HCT116 (cell line): ENCODE measurements at regions of chr11 and their contacts with region 1.

Region 1: GRCh38 chr11:2366261-2366660 is 10.8 kb upstream of the CD81 start:
- DNase-seq: no peak
- ATAC-seq: no peak
- H3K4me3 ChIP-seq: no peak overlapping the region
- H3K27ac ChIP-seq: no peak overlapping the region
- H3K4me1 ChIP-seq: no peaks in the 10 kb centered on the region
- H3K27me3 ChIP-seq: 0 out of 2 replicates have a peak, but pooled peaks cover 5% of the 10 kb centered on the region
- CTCF ChIP-seq: no peak
- POLR2A ChIP-seq: no peak
- RAD21 ChIP-seq: no peak

Region 2: DNA sequence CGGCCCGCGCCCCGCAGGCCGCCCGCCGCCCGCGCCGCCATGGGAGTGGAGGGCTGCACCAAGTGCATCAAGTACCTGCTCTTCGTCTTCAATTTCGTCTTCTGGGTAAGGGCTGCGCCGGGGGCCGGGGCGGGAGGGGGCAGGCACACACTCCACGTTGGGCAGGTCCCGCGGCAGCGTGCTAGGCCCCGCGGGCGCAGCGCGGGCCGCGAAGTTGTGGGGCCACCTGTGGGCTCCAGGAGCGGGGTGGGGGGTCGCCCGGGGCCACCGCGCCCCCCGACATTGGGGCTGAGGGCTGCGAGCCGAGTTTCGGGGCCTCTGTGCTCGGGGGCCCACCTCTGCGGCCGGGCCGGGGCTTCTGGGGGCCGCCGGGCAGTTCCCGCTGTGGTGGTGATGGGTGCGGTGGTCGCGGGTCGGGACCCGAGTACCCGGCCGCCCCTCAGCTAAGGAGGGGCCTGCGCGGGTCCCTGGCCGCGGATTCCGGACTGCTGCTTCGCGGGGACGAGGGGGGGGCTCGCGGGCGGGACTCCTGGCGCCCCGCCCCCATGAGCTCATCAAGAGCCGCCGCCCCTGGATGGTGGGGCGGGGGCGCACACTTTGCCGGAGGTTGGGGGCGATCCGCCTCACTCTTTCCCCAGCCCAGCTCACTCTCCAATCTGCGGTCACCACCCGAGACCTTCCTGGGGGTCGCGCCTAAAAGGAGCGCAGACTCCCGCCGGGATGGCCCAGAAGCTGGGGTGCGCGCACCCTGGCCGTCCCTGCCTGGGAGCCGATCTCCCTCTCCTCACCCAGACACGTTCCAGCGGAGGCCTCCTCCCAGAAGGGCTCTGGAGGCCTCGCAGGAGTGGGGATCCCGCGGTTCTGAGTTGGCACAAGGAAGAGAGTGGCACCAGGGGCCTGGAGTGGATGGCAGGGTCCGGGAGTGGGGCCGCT is 11.5 kb after region 1 on chr11:
- CTCF ChIA-PET with region 1: no interaction called
- POLR2A ChIA-PET with region 1: interaction called, 14 read pairs
- RAD21 ChIA-PET with region 1: no interaction called
- intact Hi-C with region 1: no loop called
- DNase-seq: no peak
- ATAC-seq: peak; percentile 47
- H3K4me3 ChIP-seq: peak overlapping the region; percentile 68 to 95
- H3K27ac ChIP-seq: peak overlapping the region; percentile 81
- H3K4me1 ChIP-seq: peaks cover 7 to 48% of the 10 kb centered on the region in 2 experiments
- H3K27me3 ChIP-seq: no peaks in the 10 kb centered on the region
- CTCF ChIP-seq: no peak
- POLR2A ChIP-seq: no peak
- RAD21 ChIP-seq: no peak

Region 3: DNA sequence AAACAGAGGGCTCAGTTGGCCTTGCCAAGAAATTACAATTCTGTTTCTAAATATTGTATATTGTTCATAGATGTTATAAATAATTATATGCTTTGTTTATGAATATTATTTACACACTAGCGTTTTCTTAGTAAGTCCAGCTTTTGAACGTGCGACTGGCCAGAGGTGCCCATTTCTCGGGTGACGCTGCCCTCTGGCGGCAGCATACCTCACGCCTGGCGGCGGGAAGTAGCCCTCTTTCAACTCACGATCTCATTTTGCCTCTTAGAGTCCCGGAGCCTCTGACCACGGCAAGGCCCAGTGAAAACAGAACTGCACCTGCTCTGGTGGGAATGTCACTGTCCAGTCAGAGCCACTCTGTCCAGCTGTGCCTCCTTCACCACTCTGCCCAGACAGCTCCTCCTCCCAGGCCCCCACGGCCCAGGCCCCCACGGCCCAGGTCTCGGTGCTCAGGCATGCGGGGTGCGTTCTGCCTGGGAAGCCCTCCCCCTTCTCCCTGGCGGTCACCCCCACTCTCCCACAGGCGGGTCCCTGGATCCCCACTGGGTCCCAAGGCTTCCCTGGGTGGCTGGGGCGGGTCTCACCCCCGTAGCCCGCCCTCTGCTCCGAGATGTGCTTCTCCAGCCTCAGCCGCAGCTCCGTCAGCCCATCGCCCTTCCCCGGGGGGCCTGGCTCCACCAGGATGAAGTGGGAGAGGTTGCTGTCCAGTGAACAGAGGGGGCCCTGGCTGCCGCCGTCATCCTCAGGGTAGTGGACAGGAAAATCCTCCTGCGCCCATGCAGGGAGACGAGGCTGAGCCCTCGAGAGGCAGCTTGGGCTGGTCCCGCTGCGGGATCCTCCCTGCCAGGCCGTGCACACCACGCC is 53.6 kb after region 1 on chr11:
- CTCF ChIA-PET with region 1: no interaction called
- POLR2A ChIA-PET with region 1: no interaction called
- RAD21 ChIA-PET with region 1: no interaction called
- intact Hi-C with region 1: no loop called
- DNase-seq: peak; percentile 52
- ATAC-seq: peak; percentile 61
- H3K4me3 ChIP-seq: no peak overlapping the region
- H3K27ac ChIP-seq: peak overlapping the region; percentile 16; the same call in 1 of the 2 replicates
- H3K4me1 ChIP-seq: peaks cover 0 to 13% of the 10 kb centered on the region in 2 experiments; a peak in 2 of 4 replicates
- H3K27me3 ChIP-seq: no peaks in the 10 kb centered on the region
- CTCF ChIP-seq: peak; percentile 78 to 94 (median 86)
- POLR2A ChIP-seq: no peak
- RAD21 ChIP-seq: peak; percentile 94